Activated naive CD4-positive, alpha-beta T cell treated with anti-CD3 and anti-CD28 coated beads for 36 hours (primary cell): ENCODE measurements at regions of chr1 and their contacts with region 1.

Region 1: DNA sequence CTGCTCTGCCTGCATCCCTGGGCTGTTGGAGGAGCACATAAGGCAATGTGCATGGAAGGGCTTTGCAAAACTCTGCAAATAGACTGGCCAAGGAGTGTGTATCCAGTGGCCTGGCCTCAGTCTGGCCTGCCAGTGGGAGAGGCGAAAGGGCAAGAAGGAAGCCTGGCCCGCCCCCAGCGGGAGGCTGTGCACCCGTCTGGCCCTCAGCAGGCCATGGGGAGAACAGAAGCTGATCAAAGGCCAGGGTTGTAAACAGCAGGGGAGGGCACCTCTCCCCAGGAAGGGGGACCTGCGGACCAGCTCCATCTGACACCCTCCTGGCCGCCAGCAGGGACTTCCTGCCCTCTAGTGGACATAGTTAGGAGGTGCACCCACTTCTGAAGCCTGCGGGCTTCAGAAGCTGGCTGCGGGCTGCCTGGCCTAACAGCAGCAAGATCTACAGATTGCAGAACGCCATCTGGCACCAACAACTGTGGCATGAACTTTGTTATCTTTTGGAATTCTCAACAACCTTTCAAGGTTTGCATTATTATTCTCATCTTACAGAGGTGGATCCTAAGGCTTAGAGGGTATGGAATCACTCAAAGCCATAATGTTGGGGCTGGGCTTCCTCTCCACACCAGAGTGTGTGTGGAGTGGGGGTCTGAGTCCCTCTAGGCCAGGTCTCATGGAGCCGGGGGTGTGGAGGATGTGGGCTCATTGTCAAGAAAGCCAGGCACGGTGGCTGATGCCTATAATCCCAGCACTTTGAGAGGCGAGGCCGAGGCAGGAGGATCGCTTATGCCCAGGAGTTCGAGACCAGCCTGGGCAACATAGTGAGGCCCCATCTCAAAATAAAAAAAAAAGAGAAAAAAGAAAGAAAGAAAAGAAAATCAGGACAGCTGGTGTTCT is 18.9 kb upstream of the CDK18 start:
- DNase-seq: peak; percentile 79
- H3K4me3 Mint-ChIP-seq: no peak overlapping the region
- H3K27ac Mint-ChIP-seq: no peak overlapping the region
- H3K4me1 Mint-ChIP-seq: peaks cover 12% of the 10 kb centered on the region
- H3K27me3 Mint-ChIP-seq: peaks cover 58% of the 10 kb centered on the region

Region 2: GRCh38 chr1:205335643-205336091 is 149.9 kb before region 1 on chr1:
- CTCF ChIA-PET with region 1: interaction called, 73 read pairs
- intact Hi-C with region 1: loop called (anchors 1 kb)
- DNase-seq: peak; percentile 92
- H3K4me3 Mint-ChIP-seq: no peak overlapping the region
- H3K27ac Mint-ChIP-seq: no peak overlapping the region
- H3K4me1 Mint-ChIP-seq: no peaks in the 10 kb centered on the region
- H3K27me3 Mint-ChIP-seq: no peaks in the 10 kb centered on the region

Region 3: GRCh38 chr1:205410581-205411298 is 74.8 kb before region 1 on chr1:
- CTCF ChIA-PET with region 1: interaction called, 11 read pairs
- intact Hi-C with region 1: no loop called
- DNase-seq: no peak
- H3K4me3 Mint-ChIP-seq: no peak overlapping the region
- H3K27ac Mint-ChIP-seq: no peak overlapping the region
- H3K4me1 Mint-ChIP-seq: peaks cover 8% of the 10 kb centered on the region
- H3K27me3 Mint-ChIP-seq: no peaks in the 10 kb centered on the region

Region 4: DNA sequence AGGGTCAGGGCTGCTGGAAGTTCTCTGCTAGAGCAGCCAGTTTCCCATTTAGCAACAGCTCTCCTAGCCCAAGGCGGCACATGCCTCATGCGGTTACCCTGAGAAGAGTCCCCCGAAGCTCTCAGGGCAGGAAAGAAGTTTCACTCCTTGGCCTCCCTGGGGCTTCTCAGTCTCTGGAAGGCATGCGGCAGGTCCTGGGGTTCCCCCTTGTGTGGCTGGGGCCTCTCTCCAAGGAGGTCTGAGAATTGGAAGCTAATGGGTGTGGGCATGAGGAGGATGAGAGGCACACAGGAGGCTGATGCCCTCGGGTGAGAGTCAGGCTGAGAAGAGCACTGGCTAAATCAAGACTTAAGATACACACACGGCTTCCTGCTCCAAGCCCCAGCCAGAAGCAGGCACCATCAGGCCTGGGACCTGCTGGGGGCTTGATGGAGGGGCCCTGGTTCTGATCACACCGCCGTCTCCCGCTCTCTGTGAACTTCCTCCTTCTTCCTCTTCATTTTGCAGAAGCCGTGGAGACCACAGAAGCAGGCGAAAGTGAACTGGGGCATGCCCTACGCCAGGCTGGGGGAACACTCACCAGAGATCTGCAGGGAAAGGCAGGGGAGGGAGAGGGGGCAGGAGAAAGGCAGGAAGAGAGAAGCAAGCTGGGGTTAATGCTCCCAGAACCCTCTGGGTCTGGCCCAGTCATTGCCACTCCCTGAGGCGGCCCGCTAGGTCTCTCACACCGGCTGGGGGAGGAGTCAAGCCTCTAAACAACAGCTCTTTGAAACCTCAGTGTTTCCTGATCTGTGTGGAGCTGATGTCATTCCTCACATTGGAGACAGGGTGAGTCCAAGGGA is 44.9 kb before region 1 on chr1:
- CTCF ChIA-PET with region 1: interaction called, 10 read pairs
- intact Hi-C with region 1: loop called (anchors 2 kb)
- DNase-seq: peak; percentile 93
- H3K4me3 Mint-ChIP-seq: peak overlapping the region; percentile 72
- H3K27ac Mint-ChIP-seq: peak overlapping the region; percentile 77
- H3K4me1 Mint-ChIP-seq: peaks cover 15% of the 10 kb centered on the region
- H3K27me3 Mint-ChIP-seq: no peaks in the 10 kb centered on the region

Region 5: GRCh38 chr1:205500240-205501233 is 15.0 kb after region 1 on chr1:
- CTCF ChIA-PET with region 1: interaction called, 45 read pairs
- intact Hi-C with region 1: no loop called
- DNase-seq: no peak
- H3K4me3 Mint-ChIP-seq: no peak overlapping the region
- H3K27ac Mint-ChIP-seq: no peak overlapping the region
- H3K4me1 Mint-ChIP-seq: peaks cover 12% of the 10 kb centered on the region
- H3K27me3 Mint-ChIP-seq: peaks cover 3% of the 10 kb centered on the region

Region 6: GRCh38 chr1:205878026-205878425 is 392.4 kb after region 1 on chr1:
- CTCF ChIA-PET with region 1: no interaction called
- intact Hi-C with region 1: no loop called
- DNase-seq: no peak
- H3K4me3 Mint-ChIP-seq: no peak overlapping the region
- H3K27ac Mint-ChIP-seq: peak overlapping the region; percentile 68
- H3K4me1 Mint-ChIP-seq: no peaks in the 10 kb centered on the region
- H3K27me3 Mint-ChIP-seq: peaks cover 7% of the 10 kb centered on the region